HAP-1 (cell line): ENCODE measurements at regions of chr2 and their contacts with region 1.

Region 1: GRCh38 chr2:119469661-119470297 is 38.1 kb downstream of the TMEM37 start:
- DNase-seq: peak in 1 of 2 experiments; percentile 20
- H3K4me3 ChIP-seq: no peak overlapping the region
- H3K4me1 ChIP-seq: peaks cover 3% of the 10 kb centered on the region; the same call in 1 of the 2 replicates
- H3K27me3 ChIP-seq: no peaks in the 10 kb centered on the region

Region 2: DNA sequence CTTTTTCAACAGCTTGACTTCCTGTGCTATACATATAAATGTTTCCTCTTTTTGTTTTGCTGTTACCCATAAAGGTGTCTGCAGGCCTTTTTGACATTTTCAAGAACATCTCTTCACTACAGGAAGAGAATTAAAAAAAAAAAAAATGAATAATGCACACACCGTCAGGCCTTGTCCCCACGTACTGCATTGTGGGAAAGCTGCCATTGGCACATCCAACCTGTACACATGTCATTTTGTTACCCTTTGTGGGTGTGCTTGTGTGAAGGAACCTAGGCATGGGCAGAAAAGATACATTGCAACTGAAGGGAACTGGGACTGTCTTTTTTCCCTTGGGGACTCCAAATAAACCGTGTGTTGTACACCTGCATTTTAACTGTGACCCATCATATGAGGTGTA is 54.9 kb before region 1 on chr2:
- in situ Hi-C with region 1: loop called (anchors 5 kb)
- DNase-seq: no peak
- H3K4me3 ChIP-seq: no peak overlapping the region
- H3K4me1 ChIP-seq: no peaks in the 10 kb centered on the region
- H3K27me3 ChIP-seq: peaks cover 2% of the 10 kb centered on the region; the same call in 1 of the 2 replicates